AG04450 (cell line): ENCODE measurements at regions of chr1 and their contacts with region 1.

Region 1: GRCh38 chr1:204398217-204399081 is 13.2 kb downstream of the PPP1R15B start:
- DNase-seq: no peak
- H3K4me3 ChIP-seq: no peak overlapping the region
- H3K27ac ChIP-seq: no peak overlapping the region
- H3K27me3 ChIP-seq: no peaks in the 10 kb centered on the region
- CTCF ChIP-seq: peak; percentile 85

Region 2: DNA sequence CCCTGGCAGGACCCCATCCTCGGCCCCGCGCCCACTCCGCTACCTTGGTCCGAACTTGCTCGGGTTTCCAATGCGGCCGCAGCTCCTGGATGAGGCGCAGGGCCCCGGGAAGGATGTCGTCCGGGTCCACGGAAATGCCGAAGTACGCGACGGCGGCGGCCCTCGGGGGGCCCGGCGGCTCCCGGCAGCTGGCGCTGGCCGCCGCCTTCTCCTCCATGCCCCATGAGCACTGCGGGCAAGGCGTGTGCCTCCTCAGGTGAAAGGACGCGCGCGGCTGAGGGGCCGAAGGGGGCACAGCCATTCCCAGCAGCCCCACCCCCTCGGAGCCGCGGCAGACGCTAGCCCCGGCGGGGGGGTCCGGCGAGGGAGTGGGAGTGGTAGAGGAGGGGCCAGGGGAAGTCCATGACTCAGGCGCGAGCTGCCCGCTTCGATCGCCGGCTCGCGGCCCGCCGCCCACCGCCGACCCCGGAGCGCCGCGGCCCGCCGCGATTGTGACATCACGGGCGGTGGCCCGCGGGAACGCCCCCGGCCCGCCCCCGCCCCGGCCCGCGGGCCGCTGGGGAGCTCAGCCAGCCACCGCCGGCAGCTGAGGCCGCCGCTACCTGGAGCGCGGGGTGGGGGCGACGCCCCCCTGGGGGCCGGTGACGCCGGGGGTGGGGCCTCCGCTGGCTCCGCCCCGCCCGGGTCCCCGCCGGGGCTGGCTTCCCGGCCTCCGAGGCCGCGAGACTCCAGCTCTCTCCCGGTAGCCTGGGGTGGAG is 246.7 kb before region 1 on chr1 and contains the start of gene ETNK2:
- CTCF ChIA-PET with region 1: interaction called, 12 read pairs
- POLR2A ChIA-PET with region 1: no interaction called
- DNase-seq: no peak
- H3K4me3 ChIP-seq: peak within 1 kb of the TSS; percentile 67
- H3K27ac ChIP-seq: no peak within 1 kb of the TSS
- H3K27me3 ChIP-seq: peaks cover 11% of the 10 kb centered on the region
- CTCF ChIP-seq: no peak
- polyA plus RNA-seq, gene ETNK2: 25.1 and 25.6 TPM in 2 replicates

Region 3: DNA sequence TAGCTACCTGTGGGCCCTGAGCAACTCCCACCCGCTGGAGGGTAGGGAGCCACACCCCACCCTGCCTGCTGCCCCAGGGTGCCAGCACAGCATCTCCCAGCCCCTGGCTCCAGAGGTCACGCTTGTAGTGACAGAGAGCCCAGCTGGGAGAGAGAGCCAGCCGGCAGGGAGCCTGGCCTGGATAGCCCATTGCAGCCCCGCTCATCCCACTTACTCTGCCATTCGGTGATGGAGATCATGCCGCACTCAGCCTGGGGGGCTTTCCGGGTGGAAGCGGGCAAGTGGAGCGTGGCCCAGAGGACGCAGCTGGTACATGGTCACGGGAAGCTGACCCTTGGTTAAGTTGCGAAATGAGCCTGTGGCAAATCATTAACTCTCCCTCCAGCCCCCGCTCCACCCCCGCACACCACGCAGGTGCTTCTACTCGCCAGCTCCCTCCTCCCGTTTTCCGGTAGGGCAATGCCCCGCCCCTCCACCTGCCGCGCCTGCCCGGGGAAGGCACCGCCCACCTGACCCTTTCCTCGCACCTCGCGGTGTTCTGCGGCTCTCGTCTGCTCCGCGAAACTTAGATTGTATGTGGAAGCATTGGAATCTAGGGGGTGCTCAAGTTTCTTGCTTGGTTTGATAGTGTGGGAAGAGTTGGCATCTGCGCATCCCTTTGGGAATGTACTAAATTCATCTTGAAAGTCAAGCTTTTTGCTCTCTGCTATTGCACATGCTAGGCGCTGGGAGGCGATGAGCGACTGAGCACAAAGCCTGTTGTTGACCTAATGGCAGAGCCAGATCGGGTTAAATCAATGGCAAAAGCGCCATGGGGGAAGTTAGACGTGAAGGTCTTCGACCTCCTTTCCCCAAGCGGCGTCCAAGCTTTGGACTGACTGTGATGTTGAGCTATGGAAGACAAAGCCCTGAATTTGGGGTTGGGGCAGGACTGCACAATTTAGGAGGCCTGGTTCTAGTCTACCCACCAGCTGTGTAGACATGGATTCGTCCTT is 184.5 kb before region 1 on chr1 and contains the start of gene GOLT1A:
- CTCF ChIA-PET with region 1: interaction called, 42 read pairs
- POLR2A ChIA-PET with region 1: no interaction called
- DNase-seq: peak; percentile 65
- H3K4me3 ChIP-seq: peak within 1 kb of the TSS; percentile 31
- H3K27ac ChIP-seq: no peak within 1 kb of the TSS
- H3K27me3 ChIP-seq: peaks cover 3% of the 10 kb centered on the region
- CTCF ChIP-seq: peak; percentile 90
- polyA plus RNA-seq, gene GOLT1A: not detected in 2 replicates

Region 4: GRCh38 chr1:204363335-204364124 is 34.9 kb before region 1 on chr1:
- CTCF ChIA-PET with region 1: interaction called, 55 read pairs
- POLR2A ChIA-PET with region 1: no interaction called
- DNase-seq: peak; percentile 29
- H3K4me3 ChIP-seq: peak overlapping the region; percentile 52
- H3K27ac ChIP-seq: peak overlapping the region; percentile 47
- H3K27me3 ChIP-seq: peaks cover 18% of the 10 kb centered on the region
- CTCF ChIP-seq: peak; percentile 99

Region 5: GRCh38 chr1:204384994-204385352 is 13.5 kb before region 1 on chr1:
- CTCF ChIA-PET with region 1: interaction called, 40 read pairs
- POLR2A ChIA-PET with region 1: no interaction called
- DNase-seq: no peak
- H3K4me3 ChIP-seq: no peak overlapping the region
- H3K27ac ChIP-seq: no peak overlapping the region
- H3K27me3 ChIP-seq: peaks cover 24% of the 10 kb centered on the region
- CTCF ChIP-seq: no peak

Region 6: DNA sequence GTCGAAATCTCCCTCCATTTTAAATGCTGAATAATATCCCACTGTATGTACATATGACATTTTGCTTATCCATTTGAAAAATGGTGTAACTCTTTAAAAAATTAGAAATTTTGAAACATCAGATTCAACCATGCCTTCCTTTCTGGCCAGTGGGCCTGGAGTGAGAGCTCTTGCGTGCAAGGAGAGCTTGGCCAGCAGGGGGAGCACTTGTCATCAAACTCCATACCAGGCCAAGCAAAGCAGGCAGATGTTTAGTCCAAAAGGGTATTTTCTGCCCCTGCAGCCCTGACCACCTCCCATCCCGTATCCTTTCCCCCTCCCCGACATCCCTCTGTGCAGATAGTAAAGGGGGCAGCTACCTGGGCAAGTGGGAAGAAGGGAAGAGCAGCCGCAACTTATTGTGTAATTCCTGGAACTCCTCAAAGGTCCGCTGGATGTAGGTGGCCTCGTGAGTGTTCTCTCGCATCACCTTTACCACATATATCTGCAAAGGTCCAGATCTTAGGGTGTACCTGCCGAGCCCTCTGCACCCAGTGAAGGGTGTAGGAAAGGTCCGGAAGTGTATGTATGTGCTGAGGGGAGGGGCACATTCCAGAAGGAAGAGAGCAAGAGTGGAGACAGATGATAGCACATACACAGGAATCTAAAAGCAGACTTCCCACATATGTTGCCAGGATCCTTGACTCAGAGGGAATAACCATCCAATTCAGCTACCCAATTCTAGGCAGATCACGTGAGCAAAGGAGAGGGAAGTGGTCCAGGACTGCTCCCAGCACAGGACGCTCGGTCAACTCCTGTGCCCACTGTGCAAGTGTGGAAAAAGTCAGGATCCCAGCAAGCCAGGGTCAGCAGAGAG is 33.1 kb after region 1 on chr1:
- CTCF ChIA-PET with region 1: interaction called, 13 read pairs
- POLR2A ChIA-PET with region 1: no interaction called
- DNase-seq: peak; percentile 65
- H3K4me3 ChIP-seq: no peak overlapping the region
- H3K27ac ChIP-seq: peak overlapping the region; percentile 39
- H3K27me3 ChIP-seq: peaks cover 2% of the 10 kb centered on the region
- CTCF ChIP-seq: peak; percentile 92

Region 7: DNA sequence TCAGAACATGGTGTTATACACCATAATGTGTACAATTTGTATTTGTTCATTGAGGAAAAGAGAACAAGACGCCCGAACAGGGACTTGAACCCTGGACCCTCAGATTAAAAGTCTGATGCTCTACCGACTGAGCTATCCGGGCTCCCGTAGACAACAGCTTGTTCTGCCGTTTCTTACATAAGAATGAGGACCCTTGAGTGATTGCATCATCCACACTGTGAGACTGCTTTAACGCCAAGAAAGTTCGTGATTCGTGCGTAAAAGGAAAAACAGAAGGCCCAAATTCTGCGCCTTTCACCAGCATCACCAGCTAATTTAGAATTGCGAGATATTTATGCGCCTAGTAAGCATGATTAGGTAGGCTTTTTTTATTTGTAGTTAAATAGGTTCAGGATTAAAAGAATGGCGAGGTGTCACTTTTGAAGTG is 108.5 kb after region 1 on chr1:
- CTCF ChIA-PET with region 1: interaction called, 19 read pairs
- POLR2A ChIA-PET with region 1: no interaction called
- DNase-seq: peak; percentile 88
- H3K4me3 ChIP-seq: peak overlapping the region; percentile 52
- H3K27ac ChIP-seq: peak overlapping the region; percentile 85
- H3K27me3 ChIP-seq: no peaks in the 10 kb centered on the region
- CTCF ChIP-seq: no peak